ENCODE measurements at regions of chr11 and their contacts with region 1.

Region 1: GRCh38 chr11:73478738-73479347 is 102.6 kb downstream of the RELT start:
- DNase-seq: peak; percentile 26
- ATAC-seq: peak; percentile 95
- H3K4me3 ChIP-seq: no peak overlapping the region
- H3K27ac ChIP-seq: no peak overlapping the region
- H3K4me1 ChIP-seq: peaks cover 6 to 9% of the 10 kb centered on the region in 2 experiments
- H3K27me3 ChIP-seq: no peaks in the 10 kb centered on the region
- CTCF ChIP-seq: peak; percentile 54 to 94 (median 90); a peak in 5 of 6 replicates
- POLR2A ChIP-seq: no peak
- RAD21 ChIP-seq: peak; percentile 69

Region 2: DNA sequence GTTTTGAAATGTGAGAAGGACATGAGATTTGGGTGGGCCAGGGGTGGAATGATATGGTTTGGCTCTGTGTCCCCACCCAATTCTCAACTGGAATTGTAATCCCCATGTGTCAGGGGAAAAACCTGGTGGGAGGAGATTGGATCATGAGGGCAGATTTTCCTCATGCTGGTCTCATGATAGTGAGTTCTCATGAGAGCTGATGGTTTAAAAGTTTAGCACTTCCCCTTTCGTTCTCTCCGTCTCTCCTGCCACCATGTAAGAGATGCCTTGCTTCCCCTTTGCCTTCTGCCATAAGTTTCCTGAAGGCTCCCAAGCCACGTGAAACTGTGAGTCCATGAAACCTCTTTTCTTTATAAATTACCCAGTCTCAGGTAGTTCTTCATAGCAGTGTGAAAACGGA is 450.2 kb before region 1 on chr11:
- CTCF ChIA-PET with region 1: no interaction called
- POLR2A ChIA-PET with region 1: no interaction called
- RAD21 ChIA-PET with region 1: no interaction called
- intact Hi-C with region 1: no loop called
- DNase-seq: no peak
- ATAC-seq: no peak
- H3K4me3 ChIP-seq: no peak overlapping the region
- H3K27ac ChIP-seq: no peak overlapping the region
- H3K4me1 ChIP-seq: no peaks in the 10 kb centered on the region
- H3K27me3 ChIP-seq: no peaks in the 10 kb centered on the region
- CTCF ChIP-seq: no peak
- POLR2A ChIP-seq: no peak
- RAD21 ChIP-seq: no peak

Region 3: DNA sequence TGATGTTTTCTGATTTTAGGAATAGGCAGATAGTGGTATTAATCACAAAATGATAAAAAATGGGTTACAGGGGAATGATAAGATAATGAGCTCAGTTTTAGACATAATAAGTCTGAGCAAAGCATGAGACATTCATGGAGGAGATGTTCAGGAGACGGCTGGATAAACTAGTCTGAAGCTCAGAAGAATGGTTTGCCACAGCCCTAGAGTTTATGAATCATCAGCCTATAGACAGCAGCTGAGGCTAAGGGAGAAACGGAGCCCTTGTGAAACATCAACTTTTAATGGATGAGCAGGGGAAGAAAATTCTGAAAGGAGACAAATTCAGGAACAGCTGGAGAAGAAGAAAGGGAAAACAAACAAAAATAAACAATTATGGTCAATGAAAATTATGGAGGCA is 15.5 kb before region 1 on chr11:
- CTCF ChIA-PET with region 1: interaction called, 39 read pairs
- POLR2A ChIA-PET with region 1: no interaction called
- RAD21 ChIA-PET with region 1: no interaction called
- intact Hi-C with region 1: no loop called
- DNase-seq: no peak
- ATAC-seq: no peak
- H3K4me3 ChIP-seq: no peak overlapping the region
- H3K27ac ChIP-seq: no peak overlapping the region
- H3K4me1 ChIP-seq: no peaks in the 10 kb centered on the region
- H3K27me3 ChIP-seq: no peaks in the 10 kb centered on the region
- CTCF ChIP-seq: no peak
- POLR2A ChIP-seq: no peak
- RAD21 ChIP-seq: no peak

Region 4: GRCh38 chr11:73661035-73661628 is 182.3 kb after region 1 on chr11:
- CTCF ChIA-PET with region 1: interaction called, 27 read pairs
- POLR2A ChIA-PET with region 1: no interaction called
- RAD21 ChIA-PET with region 1: interaction called, 3 to 6 read pairs
- intact Hi-C with region 1: loop called (anchors 1 kb)
- DNase-seq: peak; percentile 43
- ATAC-seq: peak; percentile 96
- H3K4me3 ChIP-seq: no peak overlapping the region
- H3K27ac ChIP-seq: peak overlapping the region; percentile 12; the same call in 1 of the 2 replicates
- H3K4me1 ChIP-seq: peaks cover 5 to 20% of the 10 kb centered on the region in 2 experiments
- H3K27me3 ChIP-seq: no peaks in the 10 kb centered on the region
- CTCF ChIP-seq: peak; percentile 92 to 95 (median 92)
- POLR2A ChIP-seq: no peak
- RAD21 ChIP-seq: peak; percentile 99